CD14-positive monocyte (primary cell): ENCODE measurements at regions of chr18 and their contacts with region 1.

Region 1: DNA sequence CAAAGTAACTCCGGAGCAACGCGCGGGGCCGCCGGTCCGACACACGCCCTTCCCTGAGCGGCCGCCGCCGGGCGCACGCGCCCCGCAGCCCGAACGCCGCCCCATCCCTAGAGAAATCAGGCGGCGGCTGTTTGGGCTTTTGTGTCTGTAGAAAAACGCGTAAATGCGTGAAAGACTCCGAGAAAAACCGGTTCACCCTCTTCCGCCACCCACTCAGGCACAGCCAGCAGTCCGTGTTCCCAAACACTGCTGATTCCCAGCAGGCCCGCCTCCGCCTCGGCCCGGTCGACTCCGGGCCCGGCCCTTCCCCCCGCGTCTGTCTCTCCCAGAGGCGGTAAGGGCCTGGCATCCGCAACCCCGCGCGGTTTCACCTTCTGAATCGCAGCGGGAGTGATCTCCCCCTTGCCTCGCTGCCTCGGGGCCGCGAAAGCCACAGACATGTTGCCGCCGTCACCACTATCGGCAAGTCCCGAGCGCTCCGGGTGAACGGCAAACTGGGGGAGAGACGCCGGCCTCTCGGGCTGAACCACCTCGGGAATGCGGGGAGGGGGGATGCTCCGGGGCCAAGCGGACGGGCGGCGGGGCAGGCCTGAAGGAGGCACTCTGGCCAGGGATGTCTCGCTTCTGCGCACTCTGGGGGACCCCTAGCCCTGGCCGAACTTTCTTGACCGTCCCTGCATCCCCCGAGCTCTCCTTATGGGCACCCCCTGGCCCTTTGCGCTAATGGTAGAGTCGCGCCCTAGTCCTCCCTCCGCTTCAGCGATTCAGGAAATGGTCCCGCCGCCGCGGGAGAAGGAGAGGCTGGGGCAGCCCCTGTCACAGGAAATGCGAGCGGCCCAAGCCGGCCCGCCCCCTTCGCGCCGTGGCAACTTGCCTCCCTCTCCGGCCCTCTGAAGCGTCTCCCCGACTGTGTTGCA is at the start of gene SS18:
- DNase-seq: peak; percentile 87 to 90 (median 88)
- H3K4me3 ChIP-seq: peak within 1 kb of the TSS; percentile 70 to 99 (median 93)
- H3K4me3 Mint-ChIP-seq: peak within 1 kb of the TSS; percentile 98
- H3K27ac ChIP-seq: peak within 1 kb of the TSS; percentile 96 to 99
- H3K27ac Mint-ChIP-seq: peak within 1 kb of the TSS; percentile 91 to 98 (median 97)
- H3K4me1 ChIP-seq: peaks cover 20 to 26% of the 10 kb centered on the region in 2 donors
- H3K4me1 Mint-ChIP-seq: peaks cover 23% of the 10 kb centered on the region
- H3K27me3 ChIP-seq: no peaks in the 10 kb centered on the region
- H3K27me3 Mint-ChIP-seq: no peaks in the 10 kb centered on the region
- CTCF ChIP-seq: no peak
- polyA plus RNA-seq, gene SS18: 23.0 to 50.5 (median 36.3) TPM

Region 2: DNA sequence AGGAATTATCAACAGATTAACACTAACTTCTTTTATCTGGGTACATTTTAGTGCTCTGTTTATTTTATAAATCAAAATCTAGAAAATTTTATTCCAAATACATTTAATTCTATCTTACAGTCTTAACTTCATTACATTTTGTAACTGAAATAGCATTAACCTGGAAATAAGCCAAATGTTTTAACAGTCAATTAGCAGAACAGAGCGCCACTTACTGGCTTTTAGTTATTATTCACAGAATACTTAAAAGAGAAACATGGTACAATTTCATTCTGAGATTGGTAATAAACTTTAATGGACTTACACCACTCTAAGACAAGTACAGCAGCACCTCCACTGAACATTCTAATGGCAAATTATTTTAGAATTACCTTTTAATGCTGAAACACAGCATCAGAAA is 38.5 kb before region 1 on chr18:
- intact Hi-C with region 1: no loop called
- DNase-seq: no peak
- H3K4me3 ChIP-seq: no peak overlapping the region
- H3K4me3 Mint-ChIP-seq: no peak overlapping the region
- H3K27ac ChIP-seq: no peak overlapping the region
- H3K27ac Mint-ChIP-seq: no peak overlapping the region
- H3K4me1 ChIP-seq: no peaks in the 10 kb centered on the region
- H3K4me1 Mint-ChIP-seq: no peaks in the 10 kb centered on the region
- H3K27me3 ChIP-seq: no peaks in the 10 kb centered on the region
- H3K27me3 Mint-ChIP-seq: no peaks in the 10 kb centered on the region
- CTCF ChIP-seq: no peak

Region 3: GRCh38 chr18:26226229-26227005 is 136.0 kb after region 1 on chr18 and contains the start of gene TAF4B:
- intact Hi-C with region 1: loop called (anchors 10 kb)
- DNase-seq: peak; percentile 88 to 91 (median 90)
- H3K4me3 ChIP-seq: peak within 1 kb of the TSS; percentile 60 to 79 (median 65)
- H3K4me3 Mint-ChIP-seq: peak within 1 kb of the TSS; percentile 97 to 98
- H3K27ac ChIP-seq: peak within 1 kb of the TSS; percentile 36 to 76
- H3K27ac Mint-ChIP-seq: peak within 1 kb of the TSS; percentile 82 to 96 (median 92)
- H3K4me1 ChIP-seq: peaks cover 13 to 24% of the 10 kb centered on the region in 2 donors
- H3K4me1 Mint-ChIP-seq: peaks cover 21% of the 10 kb centered on the region
- H3K27me3 ChIP-seq: no peaks in the 10 kb centered on the region
- H3K27me3 Mint-ChIP-seq: peaks cover 5 to 14% (median 10%) of the 10 kb centered on the region in 3 donors
- CTCF ChIP-seq: no peak
- polyA plus RNA-seq, gene TAF4B: 0.64 to 1.2 (median 0.92) TPM